ENCODE measurements at regions of chr2 and their contacts with region 1.

Region 1: DNA sequence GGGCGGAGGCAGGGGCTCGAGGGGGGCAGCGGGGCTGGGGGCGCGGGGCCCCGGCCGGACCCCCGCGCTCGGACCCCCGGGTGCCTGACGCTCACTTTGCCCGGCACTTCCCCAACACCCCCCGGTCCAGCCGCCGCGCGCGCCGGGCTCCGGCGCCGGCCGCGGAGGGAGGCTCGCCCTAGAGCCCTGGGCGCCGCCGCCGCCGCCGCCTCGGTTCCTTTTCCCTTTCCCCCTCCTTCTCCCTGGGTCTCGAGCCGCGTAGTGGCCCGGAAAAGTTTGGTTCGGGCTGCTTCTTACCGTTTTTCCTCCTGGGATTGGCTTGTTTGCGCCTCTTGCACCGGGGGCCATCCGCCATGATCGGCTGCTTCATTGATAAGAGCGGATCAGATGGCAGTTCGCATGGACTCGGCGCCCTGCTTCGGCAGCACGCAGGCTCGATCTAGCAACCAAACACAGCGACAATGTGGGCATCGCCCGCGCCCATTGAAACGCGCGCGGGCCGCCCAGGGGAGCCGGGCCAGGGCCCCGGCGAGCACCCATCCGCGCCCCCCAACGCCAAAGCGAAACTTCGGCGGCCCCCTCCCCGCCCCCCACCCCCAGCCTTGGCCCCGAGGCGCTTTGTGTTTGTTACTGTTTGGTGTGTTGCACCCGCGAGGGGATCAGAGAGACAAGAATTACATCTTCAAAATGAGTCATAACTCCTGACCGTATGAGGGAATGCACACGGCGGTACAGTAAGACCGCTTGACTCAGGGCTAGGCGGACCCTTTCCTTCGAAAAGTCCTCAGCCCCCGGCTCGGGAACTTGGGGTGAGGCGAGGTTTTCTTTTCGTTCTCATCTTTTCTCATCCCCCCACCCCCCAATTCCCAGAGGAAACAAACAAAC is 2.7 kb downstream of the ZEB2 start:
- DNase-seq: peak; percentile 85

Region 2: DNA sequence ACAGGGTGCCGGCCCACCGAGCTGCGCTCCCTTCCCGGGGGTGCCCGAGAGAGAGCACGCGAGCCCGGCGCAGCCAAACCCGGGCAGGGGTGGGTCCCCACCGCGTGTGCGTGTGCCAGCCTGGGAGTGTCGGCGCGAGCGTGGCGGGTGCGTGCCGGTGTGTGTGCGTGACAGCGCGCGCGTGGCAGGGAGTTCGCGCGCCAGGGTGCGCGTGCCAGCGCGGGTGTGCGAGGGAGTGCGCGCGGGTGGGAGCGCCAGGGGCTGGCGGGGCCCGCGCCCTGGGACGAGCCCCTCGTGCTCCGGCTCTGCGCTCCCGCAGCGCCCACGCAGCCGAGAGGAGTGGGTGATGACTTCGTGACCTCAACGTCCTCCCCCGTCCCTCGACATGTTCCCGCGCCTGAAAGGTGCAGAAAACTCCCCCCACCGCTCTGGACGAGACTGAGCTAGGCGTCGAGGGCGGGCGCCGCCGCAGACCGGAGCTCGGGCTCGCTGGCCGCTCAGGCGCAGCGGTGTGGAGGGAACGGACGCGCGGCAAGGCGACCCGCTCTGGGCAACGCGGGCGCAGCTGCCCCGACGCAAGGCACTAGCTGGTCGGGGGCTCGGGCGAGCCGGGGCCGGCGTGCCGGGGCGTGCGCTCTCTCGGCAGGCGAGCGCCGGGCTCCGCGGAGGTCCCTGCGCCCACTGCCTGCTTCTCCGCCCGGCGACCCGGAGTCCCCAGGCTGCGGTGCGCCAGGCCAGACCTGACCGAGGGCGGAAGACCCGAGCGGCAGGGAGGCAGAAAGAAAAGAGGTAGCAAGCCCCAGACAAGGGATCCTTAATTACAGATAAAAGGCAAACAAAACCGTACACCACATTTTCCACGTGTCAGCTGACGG is 580.1 kb before region 1 on chr2:
- intact Hi-C with region 1: loop called (anchors 5 kb)
- DNase-seq: peak; percentile 83

Region 3: GRCh38 chr2:144332356-144333142 is 184.7 kb before region 1 on chr2:
- intact Hi-C with region 1: loop called in 1 of 2 experiments (anchors 5 kb)
- DNase-seq: peak; percentile 96

Region 4: GRCh38 chr2:144449028-144449406 is 68.2 kb before region 1 on chr2:
- intact Hi-C with region 1: loop called in 1 of 2 experiments (anchors 5 kb)
- DNase-seq: no peak

Region 5: DNA sequence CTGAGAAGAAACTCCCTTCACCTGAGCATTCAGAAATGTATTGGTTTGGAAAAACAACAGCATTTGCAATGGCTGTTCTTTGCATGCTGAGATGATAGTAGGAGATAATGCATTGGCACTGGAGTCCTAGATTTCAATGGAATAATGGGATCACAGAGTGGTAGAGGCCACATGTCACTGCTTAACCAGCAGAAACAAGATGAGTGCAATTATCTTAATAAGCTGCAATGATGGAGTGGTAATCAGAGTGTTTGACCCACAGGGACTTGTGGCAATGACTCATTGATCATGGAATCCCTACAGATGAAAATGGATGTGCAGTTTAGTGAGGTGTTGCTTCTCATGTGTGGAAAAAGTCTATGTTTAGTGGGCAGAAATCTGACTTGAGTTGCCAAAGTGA is 221.5 kb after region 1 on chr2:
- intact Hi-C with region 1: no loop called
- DNase-seq: no peak

Region 6: DNA sequence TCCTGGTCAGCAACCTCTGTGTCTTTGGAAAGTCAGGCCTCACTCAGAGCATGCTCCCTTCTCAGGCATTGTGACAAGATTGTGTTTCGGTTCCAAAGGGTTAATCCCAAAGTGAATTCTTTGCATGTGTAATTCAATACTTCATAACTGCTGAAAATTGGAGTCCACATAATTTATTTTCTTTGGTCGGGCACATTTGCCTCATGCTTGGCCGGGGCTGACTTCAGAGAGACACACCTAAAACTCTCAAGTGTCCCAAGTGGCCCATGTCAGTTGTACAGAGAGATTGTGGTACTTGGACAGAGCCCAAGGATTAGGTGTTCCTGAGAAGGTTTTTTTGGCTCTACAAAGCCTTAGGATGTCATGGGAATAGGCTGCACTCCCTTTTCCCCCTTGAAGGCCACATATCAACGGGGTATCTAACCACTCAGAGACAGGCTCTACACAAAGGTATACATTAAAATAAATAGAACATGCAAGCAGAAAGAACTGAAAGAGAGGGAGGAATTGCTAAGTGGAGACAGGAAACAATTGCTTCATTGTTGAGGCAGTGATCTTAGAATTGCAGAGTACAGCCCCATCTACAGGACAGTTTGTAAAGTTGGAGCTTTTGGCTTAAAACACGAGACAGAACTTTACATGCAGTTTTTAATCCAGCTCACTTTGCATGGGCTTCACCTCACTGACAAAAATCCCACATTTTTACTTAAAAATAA is 1235.0 kb after region 1 on chr2:
- intact Hi-C with region 1: loop called in 1 of 2 experiments (anchors 10 kb)
- DNase-seq: no peak